PC-3 (cell line): ENCODE measurements at regions of chr12 and their contacts with region 1.

Region 1: DNA sequence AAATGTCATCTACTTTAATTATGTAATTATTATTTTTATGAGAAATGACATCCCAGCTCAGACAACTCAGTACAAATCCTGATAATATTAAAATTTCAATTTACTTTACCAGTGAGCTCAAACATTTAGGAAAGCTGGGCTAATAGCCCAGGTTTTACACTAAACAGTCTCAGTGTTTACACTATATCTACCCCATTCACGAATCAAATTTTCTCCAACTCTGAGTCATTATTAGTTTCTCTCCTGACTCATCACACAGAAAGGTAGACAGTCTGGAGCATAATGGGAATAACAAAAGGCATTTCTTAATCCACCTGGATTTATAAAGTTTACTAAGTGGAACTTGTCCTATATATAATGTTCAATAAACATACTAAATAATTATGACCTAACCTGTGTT is 5.7 kb downstream of the PAWR start:
- DNase-seq: peak; percentile 95
- ATAC-seq: peak; percentile 70
- H3K4me3 ChIP-seq: peak overlapping the region; percentile 87
- H3K27ac ChIP-seq: peak overlapping the region; percentile 86
- H3K4me1 ChIP-seq: peaks cover 61% of the 10 kb centered on the region
- H3K27me3 ChIP-seq: no peaks in the 10 kb centered on the region
- CTCF ChIP-seq: no peak

Region 2: GRCh38 chr12:79512053-79512452 is 173.0 kb before region 1 on chr12:
- CTCF ChIA-PET with region 1: no interaction called
- POLR2A ChIA-PET with region 1: no interaction called
- intact Hi-C with region 1: no loop called
- DNase-seq: peak; percentile 38
- ATAC-seq: no peak
- H3K4me3 ChIP-seq: no peak overlapping the region
- H3K27ac ChIP-seq: no peak overlapping the region
- H3K4me1 ChIP-seq: no peaks in the 10 kb centered on the region
- H3K27me3 ChIP-seq: no peaks in the 10 kb centered on the region
- CTCF ChIP-seq: peak; percentile 60

Region 3: DNA sequence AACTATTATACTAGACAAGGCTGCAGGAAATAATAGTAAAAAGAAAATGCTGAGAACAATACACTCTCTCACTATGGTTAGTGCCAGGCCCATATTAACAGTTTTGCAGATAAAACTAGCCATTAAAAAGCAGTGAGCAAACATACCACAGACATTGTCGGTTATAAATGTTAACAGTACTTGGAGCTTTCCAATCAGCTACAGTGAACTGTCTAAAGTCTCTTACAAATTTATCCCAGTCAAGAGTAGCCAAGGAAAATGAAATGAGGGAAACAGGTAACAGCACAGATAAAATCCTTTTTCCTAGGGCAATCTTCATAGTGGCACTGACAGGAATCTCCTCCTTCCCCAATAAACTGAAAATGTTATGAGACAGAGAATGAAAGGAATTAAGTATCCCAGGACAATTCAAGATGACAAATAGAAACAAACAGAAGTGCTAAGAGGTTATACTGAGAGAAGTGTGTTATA is 25.1 kb before region 1 on chr12:
- CTCF ChIA-PET with region 1: no interaction called
- POLR2A ChIA-PET with region 1: no interaction called
- intact Hi-C with region 1: loop called (anchors 2 kb)
- DNase-seq: no peak
- ATAC-seq: peak; percentile 88
- H3K4me3 ChIP-seq: no peak overlapping the region
- H3K27ac ChIP-seq: no peak overlapping the region
- H3K4me1 ChIP-seq: peaks cover 7% of the 10 kb centered on the region; the same call in 1 of the 2 replicates
- H3K27me3 ChIP-seq: no peaks in the 10 kb centered on the region
- CTCF ChIP-seq: no peak

Region 4: GRCh38 chr12:80262346-80262745 is 577.3 kb after region 1 on chr12:
- CTCF ChIA-PET with region 1: no interaction called
- POLR2A ChIA-PET with region 1: no interaction called
- intact Hi-C with region 1: no loop called
- DNase-seq: peak; percentile 23
- ATAC-seq: no peak
- H3K4me3 ChIP-seq: no peak overlapping the region
- H3K27ac ChIP-seq: no peak overlapping the region
- H3K4me1 ChIP-seq: no peaks in the 10 kb centered on the region
- H3K27me3 ChIP-seq: no peaks in the 10 kb centered on the region
- CTCF ChIP-seq: no peak